Ascending aorta (tissue), 2 donors: ENCODE measurements at regions of chr5 and their contacts with region 1.

Region 1: GRCh38 chr5:146878476-146879172 is at the start of gene PPP2R2B:
- DNase-seq: peak in 1 of 2 donors; percentile 80
- H3K4me3 ChIP-seq: peak within 1 kb of the TSS; percentile 76 to 85
- H3K27ac ChIP-seq: peak within 1 kb of the TSS; percentile 50 to 58
- H3K4me1 ChIP-seq: peaks cover 0 to 11% of the 10 kb centered on the region in 2 donors
- H3K27me3 ChIP-seq: no peaks in the 10 kb centered on the region
- CTCF ChIP-seq: no peak
- total RNA-seq, gene PPP2R2B: 10.0 TPM

Region 2: DNA sequence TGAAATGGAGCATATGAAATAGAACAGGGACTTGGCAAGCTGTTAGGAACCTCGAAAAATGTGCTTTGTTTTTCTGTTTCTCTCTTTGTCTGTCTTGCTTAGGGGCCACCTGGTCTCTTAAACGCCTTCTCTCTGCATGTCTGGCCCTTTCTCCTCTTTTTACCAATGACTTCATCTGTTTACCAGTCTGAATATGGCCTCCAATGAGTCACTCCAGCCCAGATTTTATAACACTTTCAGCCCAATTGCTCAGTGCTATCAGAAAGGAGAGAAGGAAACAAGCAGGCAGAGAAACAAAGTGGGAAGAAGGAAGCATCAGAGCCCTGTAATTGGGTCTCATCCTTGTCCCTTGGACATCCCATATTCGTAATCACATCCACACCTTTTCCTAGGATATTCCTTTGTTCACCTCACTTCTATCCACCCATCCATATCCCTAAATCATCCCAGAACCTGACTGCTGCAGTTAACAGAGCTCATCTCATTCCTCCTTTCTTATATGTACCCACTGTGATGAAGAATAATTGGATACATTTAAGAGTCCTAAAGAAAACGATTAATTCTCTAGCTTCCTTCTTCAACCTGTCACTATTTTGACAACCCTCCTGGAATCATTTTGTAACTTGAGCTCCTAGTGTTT is 210.9 kb before region 1 on chr5:
- intact Hi-C with region 1: loop called (anchors 5 kb)
- DNase-seq: no peak
- H3K4me3 ChIP-seq: no peak overlapping the region
- H3K27ac ChIP-seq: peak overlapping the region; percentile 79 to 82
- H3K4me1 ChIP-seq: peaks cover 0 to 8% of the 10 kb centered on the region in 2 donors
- H3K27me3 ChIP-seq: no peaks in the 10 kb centered on the region
- CTCF ChIP-seq: no peak

Region 3: DNA sequence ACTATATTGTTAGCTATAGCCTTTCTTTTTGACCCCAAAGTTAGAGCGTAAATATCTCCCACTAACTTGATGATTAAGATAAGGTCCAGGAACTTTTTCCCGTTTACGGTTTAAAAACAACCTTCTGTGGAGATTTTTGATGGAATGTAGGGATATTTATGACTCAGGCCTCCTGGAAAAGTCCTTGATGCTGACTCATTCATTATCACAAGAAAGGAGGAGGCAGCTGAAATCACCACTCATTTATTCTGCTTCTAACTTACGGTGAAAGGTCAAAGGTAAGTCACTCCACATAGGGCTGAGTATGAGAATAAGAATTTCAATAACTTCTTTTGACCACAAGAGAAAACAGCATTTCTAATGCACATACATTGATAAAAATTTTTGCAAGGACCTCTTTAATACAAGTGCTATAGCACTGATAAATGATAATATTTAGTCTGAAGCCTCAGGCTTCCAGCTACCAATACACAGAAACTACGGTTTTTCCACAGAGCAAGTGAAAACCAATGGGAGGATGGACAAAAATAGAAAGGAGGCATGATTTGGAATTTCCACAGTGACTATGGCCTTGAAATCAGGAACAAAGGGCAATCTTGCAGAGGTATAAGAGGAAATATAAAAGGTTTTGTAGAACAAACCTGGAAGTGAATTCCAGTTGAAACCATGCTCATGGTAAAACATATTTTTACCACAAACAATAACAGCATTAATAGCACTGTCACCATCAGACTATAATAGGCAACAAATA is 146.5 kb before region 1 on chr5:
- intact Hi-C with region 1: loop called (anchors 5 kb)
- DNase-seq: no peak
- H3K4me3 ChIP-seq: no peak overlapping the region
- H3K27ac ChIP-seq: peak overlapping the region; percentile 26 to 53
- H3K4me1 ChIP-seq: peaks cover 7 to 10% of the 10 kb centered on the region in 2 donors
- H3K27me3 ChIP-seq: no peaks in the 10 kb centered on the region
- CTCF ChIP-seq: no peak

Region 4: DNA sequence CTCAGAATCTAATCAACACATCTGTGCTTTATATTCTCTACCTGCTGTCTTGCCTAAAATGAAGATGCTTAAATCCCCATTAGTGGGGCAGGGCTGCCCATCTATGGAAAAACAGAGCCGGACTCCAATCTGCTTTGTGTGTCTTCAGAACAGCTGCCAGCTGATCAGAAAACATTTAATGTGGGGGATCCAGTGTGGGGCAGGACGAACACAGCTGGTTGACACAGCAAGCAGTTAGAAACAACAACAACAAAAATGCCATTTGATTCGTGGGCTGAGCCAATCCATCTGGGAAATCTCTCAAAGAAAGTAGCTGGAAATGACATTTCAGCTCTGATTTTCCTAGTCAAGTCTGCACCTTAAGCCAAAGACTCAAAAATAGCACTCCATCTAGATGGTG is 99.8 kb before region 1 on chr5:
- intact Hi-C with region 1: no loop called
- DNase-seq: no peak
- H3K4me3 ChIP-seq: no peak overlapping the region
- H3K27ac ChIP-seq: no peak overlapping the region
- H3K4me1 ChIP-seq: no peaks in the 10 kb centered on the region
- H3K27me3 ChIP-seq: no peaks in the 10 kb centered on the region
- CTCF ChIP-seq: no peak

Region 5: GRCh38 chr5:146794326-146795029 is 84.1 kb before region 1 on chr5:
- intact Hi-C with region 1: loop called (anchors 5 kb)
- DNase-seq: no peak
- H3K4me3 ChIP-seq: peak overlapping the region in 1 of 2 donors; percentile 17
- H3K27ac ChIP-seq: peak overlapping the region; percentile 50 to 60
- H3K4me1 ChIP-seq: peaks cover 6 to 40% of the 10 kb centered on the region in 2 donors
- H3K27me3 ChIP-seq: no peaks in the 10 kb centered on the region
- CTCF ChIP-seq: no peak

Region 6: GRCh38 chr5:146832985-146833734 is 45.5 kb before region 1 on chr5:
- intact Hi-C with region 1: loop called (anchors 5 kb)
- DNase-seq: no peak
- H3K4me3 ChIP-seq: no peak overlapping the region
- H3K27ac ChIP-seq: no peak overlapping the region
- H3K4me1 ChIP-seq: peaks cover 0 to 8% of the 10 kb centered on the region in 2 donors
- H3K27me3 ChIP-seq: no peaks in the 10 kb centered on the region
- CTCF ChIP-seq: no peak